A549 (cell line): ENCODE measurements at regions of chr1 and their contacts with region 1.

Region 1: GRCh38 chr1:156065212-156065611 is 4.3 kb downstream of the RAB25 start:
- DNase-seq: no peak
- ATAC-seq: no peak
- H3K4me3 ChIP-seq: no peak overlapping the region
- H3K27ac ChIP-seq: no peak overlapping the region
- H3K4me1 ChIP-seq: no peaks in the 10 kb centered on the region; the same call in 2 of the 3 replicates
- CTCF ChIP-seq: no peak
- EP300 ChIP-seq: no peak
- POLR2A ChIP-seq: no peak
- RAD21 ChIP-seq: no peak

Region 2: DNA sequence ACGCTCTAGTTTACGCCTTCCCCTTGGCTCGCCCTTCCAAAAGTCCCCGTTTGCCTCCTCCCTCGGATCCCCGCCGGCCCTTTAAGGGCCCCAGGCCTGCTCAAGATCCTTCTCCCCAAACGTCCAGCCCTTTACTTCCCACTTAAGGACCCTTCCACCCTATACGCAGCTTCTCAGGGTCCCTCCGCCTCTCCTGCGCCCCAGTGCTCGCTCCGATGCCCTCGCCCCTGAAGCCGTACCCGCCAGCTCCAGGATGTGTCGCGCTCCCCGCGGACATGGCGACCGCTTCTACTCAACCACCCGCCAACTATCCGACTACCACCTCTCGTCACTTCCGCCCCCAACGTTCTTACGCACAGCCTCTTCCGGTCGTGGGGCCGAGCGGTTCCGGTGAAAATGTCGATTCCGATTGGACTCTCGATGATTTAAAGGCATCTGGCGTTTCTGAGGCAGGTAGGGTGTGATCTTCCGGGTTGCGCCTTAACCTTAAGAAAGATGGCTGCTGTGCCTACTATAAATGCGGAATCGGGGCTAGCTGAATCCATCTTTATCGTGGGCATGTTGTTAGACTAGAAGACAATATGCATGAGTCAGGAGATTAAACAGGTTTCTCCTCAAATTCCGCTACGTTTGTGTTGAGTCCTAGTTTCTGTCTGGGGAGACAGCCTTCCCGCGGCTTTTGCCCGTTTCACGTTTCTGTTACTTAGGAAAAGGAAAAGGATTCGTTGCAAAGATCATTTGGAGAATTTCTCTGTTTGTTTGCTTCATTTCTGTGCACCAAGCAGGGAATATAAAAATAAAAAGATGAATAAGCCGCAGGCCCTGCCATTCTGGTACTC is 130.9 kb before region 1 on chr1 and contains the start of gene KHDC4:
- CTCF ChIA-PET with region 1: interaction called, 34 read pairs
- POLR2A ChIA-PET with region 1: no interaction called
- DNase-seq: peak; percentile 97 to 99
- ATAC-seq: peak; percentile 94 to 97
- H3K4me3 ChIP-seq: peak within 1 kb of the TSS; percentile 81
- H3K27ac ChIP-seq: peak within 1 kb of the TSS; percentile 91 to 94
- H3K4me1 ChIP-seq: peaks cover 42% of the 10 kb centered on the region
- CTCF ChIP-seq: no peak
- EP300 ChIP-seq: no peak
- POLR2A ChIP-seq: peak; percentile 94
- RAD21 ChIP-seq: no peak
- polyA plus RNA-seq, gene KHDC4: 69.9 and 72.3 TPM in 2 replicates

Region 3: DNA sequence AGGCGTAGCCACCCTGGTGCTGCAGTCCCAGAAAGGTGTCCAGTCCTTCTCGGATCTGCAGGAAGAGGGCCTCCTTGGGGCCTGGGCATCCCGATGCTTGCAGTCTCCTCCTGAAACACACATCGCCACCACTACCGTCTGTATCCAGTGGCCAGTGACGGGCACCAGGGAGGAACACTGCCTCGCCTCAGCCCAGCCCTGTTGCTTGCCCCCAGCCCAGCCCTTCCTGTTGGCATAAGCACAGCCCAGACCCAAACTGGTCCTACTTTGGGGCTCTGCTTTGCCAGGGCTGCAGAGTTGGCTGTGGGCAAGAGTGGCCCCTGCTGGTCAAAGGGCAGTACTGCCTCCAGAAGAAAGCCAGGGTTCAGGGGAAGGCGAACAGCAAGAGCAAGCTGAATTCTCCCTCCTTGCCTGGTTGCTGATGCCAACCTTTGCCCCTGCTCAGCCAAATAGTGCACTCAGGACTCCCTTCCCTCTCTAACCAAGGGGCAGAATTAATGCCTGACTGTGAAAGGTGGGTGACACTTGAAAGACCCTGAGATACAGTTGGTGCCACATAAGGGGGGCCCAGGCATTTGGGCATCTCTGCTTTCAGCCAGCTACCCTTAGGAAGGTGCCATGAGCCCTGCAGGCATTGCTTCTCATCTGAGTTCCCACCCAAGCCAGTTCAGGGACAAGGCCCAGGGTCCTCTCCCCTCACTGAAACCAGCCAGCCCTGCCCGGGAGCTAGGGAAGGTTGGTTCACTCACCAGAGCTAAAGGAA is 75.8 kb before region 1 on chr1:
- CTCF ChIA-PET with region 1: interaction called, 15 read pairs
- POLR2A ChIA-PET with region 1: no interaction called
- DNase-seq: peak in 1 of 2 experiments; percentile 71
- ATAC-seq: peak; percentile 90 to 96
- H3K4me3 ChIP-seq: no peak overlapping the region
- H3K27ac ChIP-seq: peak overlapping the region; percentile 66 to 77
- H3K4me1 ChIP-seq: peaks cover 9% of the 10 kb centered on the region
- CTCF ChIP-seq: peak; percentile 96
- EP300 ChIP-seq: no peak
- POLR2A ChIP-seq: no peak
- RAD21 ChIP-seq: peak; percentile 98 to 99

Region 4: GRCh38 chr1:156006666-156007376 is 58.4 kb before region 1 on chr1:
- CTCF ChIA-PET with region 1: interaction called, 19 read pairs
- POLR2A ChIA-PET with region 1: no interaction called
- DNase-seq: no peak
- ATAC-seq: no peak
- H3K4me3 ChIP-seq: no peak overlapping the region
- H3K27ac ChIP-seq: no peak overlapping the region
- H3K4me1 ChIP-seq: peaks cover 31% of the 10 kb centered on the region
- CTCF ChIP-seq: no peak
- EP300 ChIP-seq: no peak
- POLR2A ChIP-seq: no peak
- RAD21 ChIP-seq: no peak

Region 5: GRCh38 chr1:156054500-156055280 is 10.5 kb before region 1 on chr1 and contains the start of gene LAMTOR2:
- CTCF ChIA-PET with region 1: interaction called, 33 read pairs
- POLR2A ChIA-PET with region 1: no interaction called
- DNase-seq: peak; percentile 97 to 98
- ATAC-seq: peak; percentile 81 to 90
- H3K4me3 ChIP-seq: peak within 1 kb of the TSS; percentile 85
- H3K27ac ChIP-seq: peak within 1 kb of the TSS; percentile 94 to 97
- H3K4me1 ChIP-seq: peaks cover 10% of the 10 kb centered on the region; the same call in 2 of the 3 replicates
- CTCF ChIP-seq: no peak
- EP300 ChIP-seq: no peak
- POLR2A ChIP-seq: peak; percentile 83
- RAD21 ChIP-seq: no peak
- polyA plus RNA-seq, gene LAMTOR2: 63.0 and 71.4 TPM in 2 replicates

Region 6: GRCh38 chr1:156082309-156083091 is 17.3 kb after region 1 on chr1 and contains the start of gene MEX3A:
- CTCF ChIA-PET with region 1: interaction called, 19 read pairs
- POLR2A ChIA-PET with region 1: no interaction called
- DNase-seq: peak; percentile 59 to 86
- ATAC-seq: peak; percentile 78 to 88
- H3K4me3 ChIP-seq: peak within 1 kb of the TSS; percentile 83
- H3K27ac ChIP-seq: peak within 1 kb of the TSS; percentile 88 to 93
- H3K4me1 ChIP-seq: peaks cover 29% of the 10 kb centered on the region
- CTCF ChIP-seq: no peak
- EP300 ChIP-seq: no peak
- POLR2A ChIP-seq: 0 out of 2 replicates have a peak, but pooled peaks have one; percentile 9
- RAD21 ChIP-seq: no peak
- polyA plus RNA-seq, gene MEX3A: 1.8 and 2.4 TPM in 2 replicates

Region 7: DNA sequence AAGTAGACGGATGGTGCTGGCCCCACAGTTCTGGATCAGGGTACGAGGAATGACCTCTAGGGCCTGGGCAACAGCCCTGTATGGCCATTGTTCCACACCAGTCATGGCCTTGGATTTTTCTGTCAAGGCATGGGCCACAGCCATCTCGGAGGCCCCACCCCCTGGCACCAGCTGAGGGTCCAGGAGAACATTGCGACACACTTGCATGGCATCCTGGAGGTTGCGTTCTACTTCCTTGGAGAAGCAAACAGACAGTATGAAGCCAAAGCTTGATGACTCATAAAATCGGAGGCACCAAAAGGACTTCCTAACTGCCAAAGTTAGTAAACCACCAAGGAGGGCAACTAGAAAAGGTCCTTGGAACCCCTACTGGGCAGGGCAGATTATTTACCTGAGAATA is 245.8 kb after region 1 on chr1:
- CTCF ChIA-PET with region 1: no interaction called
- POLR2A ChIA-PET with region 1: no interaction called
- DNase-seq: peak in 1 of 2 experiments; percentile 47
- ATAC-seq: peak; percentile 34 to 44; a peak in 3 of 6 replicates
- H3K4me3 ChIP-seq: no peak overlapping the region
- H3K27ac ChIP-seq: no peak overlapping the region
- H3K4me1 ChIP-seq: peaks cover 16% of the 10 kb centered on the region
- CTCF ChIP-seq: no peak
- EP300 ChIP-seq: no peak
- POLR2A ChIP-seq: no peak
- RAD21 ChIP-seq: no peak